Activated CD4-positive, alpha-beta T cell treated with anti-CD3 and anti-CD28 coated beads for 36 hours (primary cell): ENCODE measurements at regions of chr2 and their contacts with region 1.

Region 1: DNA sequence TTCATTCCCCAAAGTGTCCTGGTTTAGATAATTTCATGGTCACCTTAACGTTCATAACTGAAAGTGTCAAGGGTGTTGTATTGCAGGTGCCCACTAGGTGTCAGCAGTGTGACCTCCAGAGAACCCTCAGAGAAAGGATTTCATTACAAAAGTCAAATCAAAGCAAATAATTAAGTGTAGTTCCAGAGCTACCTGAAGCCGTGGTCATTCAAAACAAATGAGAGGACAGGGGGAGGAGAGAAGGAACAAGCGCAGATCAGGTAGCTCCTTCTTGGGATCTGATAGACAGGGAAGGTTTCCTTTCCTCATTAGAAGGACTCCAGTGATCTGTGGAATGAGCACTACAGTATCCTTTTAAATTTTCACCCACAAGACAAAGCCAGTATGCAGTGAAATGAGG is at the start of gene SLC9A4:
- DNase-seq: peak; percentile 77
- ATAC-seq: no peak
- H3K4me3 Mint-ChIP-seq: no peak within 1 kb of the TSS
- H3K27ac Mint-ChIP-seq: no peak within 1 kb of the TSS
- H3K4me1 Mint-ChIP-seq: no peaks in the 10 kb centered on the region
- H3K27me3 Mint-ChIP-seq: peaks cover 13% of the 10 kb centered on the region
- total RNA-seq, gene SLC9A4: 0.11 TPM in 1 of 2 experiments, not detected in the other

Region 2: GRCh38 chr2:102436323-102436722 is 36.7 kb before region 1 on chr2:
- CTCF ChIA-PET with region 1: no interaction called
- POLR2A ChIA-PET with region 1: no interaction called
- intact Hi-C with region 1: no loop called
- DNase-seq: peak; percentile 38
- ATAC-seq: no peak
- H3K4me3 Mint-ChIP-seq: no peak overlapping the region
- H3K27ac Mint-ChIP-seq: peak overlapping the region; percentile 71
- H3K4me1 Mint-ChIP-seq: peaks cover 30% of the 10 kb centered on the region
- H3K27me3 Mint-ChIP-seq: no peaks in the 10 kb centered on the region

Region 3: GRCh38 chr2:102460467-102460866 is 12.6 kb before region 1 on chr2:
- CTCF ChIA-PET with region 1: interaction called, 33 read pairs
- POLR2A ChIA-PET with region 1: no interaction called
- intact Hi-C with region 1: no loop called
- DNase-seq: no peak
- ATAC-seq: no peak
- H3K4me3 Mint-ChIP-seq: no peak overlapping the region
- H3K27ac Mint-ChIP-seq: no peak overlapping the region
- H3K4me1 Mint-ChIP-seq: no peaks in the 10 kb centered on the region
- H3K27me3 Mint-ChIP-seq: peaks cover 15% of the 10 kb centered on the region

Region 4: DNA sequence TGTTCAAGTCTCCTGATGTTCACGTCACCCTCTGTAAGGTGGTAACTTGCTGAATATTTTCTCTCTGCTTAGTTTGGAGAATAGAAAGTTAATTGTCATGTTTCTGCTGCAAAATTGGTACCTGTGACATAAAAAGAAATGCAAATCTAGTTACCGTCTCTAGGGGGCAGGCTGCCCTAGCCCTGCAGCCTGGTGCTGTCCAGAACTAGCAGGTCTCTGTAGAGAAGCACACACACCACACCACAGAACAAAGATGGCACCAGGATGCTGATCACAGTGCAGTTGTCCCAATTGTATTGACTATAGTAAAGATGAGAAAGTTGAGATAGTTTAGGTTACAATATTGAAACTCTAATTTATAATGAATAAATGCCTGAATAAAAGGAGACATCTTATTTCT is 47.0 kb after region 1 on chr2:
- CTCF ChIA-PET with region 1: interaction called, 6 read pairs
- POLR2A ChIA-PET with region 1: no interaction called
- intact Hi-C with region 1: loop called in 1 of 2 experiments (anchors 2 kb)
- DNase-seq: peak; percentile 52
- ATAC-seq: peak; percentile 80
- H3K4me3 Mint-ChIP-seq: no peak overlapping the region
- H3K27ac Mint-ChIP-seq: no peak overlapping the region
- H3K4me1 Mint-ChIP-seq: no peaks in the 10 kb centered on the region
- H3K27me3 Mint-ChIP-seq: peaks cover 2% of the 10 kb centered on the region

Region 5: DNA sequence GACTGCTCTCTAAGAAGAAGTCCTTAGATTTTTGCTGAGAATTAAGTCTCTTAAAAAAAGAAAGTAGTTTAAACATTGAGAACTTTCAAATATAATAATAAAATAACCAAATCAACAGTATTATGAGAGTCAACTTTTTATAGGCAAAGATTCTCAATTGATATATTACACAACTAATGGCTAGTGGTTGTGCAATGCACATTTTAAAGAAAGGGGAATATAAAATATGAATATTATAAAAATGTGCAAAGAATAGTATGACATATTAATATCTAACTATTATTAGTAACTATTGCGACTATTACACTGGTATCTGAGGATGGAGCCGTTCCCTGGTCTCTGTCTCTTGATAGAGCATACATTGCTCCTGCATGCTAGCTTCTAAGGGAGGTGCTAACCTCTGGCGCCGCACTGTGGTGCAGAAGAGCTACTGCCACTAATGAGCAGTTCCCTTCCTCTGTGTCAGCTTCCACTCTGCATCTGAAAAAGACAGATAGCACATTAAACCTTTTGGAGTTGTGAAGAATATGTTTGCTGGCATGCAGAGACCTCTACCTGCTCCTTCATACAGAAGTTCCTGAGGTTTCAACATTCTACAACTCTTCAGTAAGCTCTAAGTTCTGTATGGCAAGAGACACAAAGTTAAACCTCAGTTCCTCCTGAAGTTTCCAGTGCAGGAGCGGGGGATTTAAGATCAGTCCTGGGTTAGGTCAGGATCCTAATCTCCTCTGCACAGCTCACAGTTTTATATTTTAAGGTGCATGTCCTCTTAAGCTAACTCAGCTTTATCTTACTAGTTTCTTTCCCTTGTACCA is 142.8 kb after region 1 on chr2:
- CTCF ChIA-PET with region 1: interaction called, 80 read pairs
- POLR2A ChIA-PET with region 1: no interaction called
- intact Hi-C with region 1: loop called (anchors 1 kb)
- DNase-seq: peak; percentile 80
- ATAC-seq: peak; percentile 86
- H3K4me3 Mint-ChIP-seq: no peak overlapping the region
- H3K27ac Mint-ChIP-seq: no peak overlapping the region
- H3K4me1 Mint-ChIP-seq: peaks cover 15% of the 10 kb centered on the region
- H3K27me3 Mint-ChIP-seq: peaks cover 35% of the 10 kb centered on the region

Region 6: DNA sequence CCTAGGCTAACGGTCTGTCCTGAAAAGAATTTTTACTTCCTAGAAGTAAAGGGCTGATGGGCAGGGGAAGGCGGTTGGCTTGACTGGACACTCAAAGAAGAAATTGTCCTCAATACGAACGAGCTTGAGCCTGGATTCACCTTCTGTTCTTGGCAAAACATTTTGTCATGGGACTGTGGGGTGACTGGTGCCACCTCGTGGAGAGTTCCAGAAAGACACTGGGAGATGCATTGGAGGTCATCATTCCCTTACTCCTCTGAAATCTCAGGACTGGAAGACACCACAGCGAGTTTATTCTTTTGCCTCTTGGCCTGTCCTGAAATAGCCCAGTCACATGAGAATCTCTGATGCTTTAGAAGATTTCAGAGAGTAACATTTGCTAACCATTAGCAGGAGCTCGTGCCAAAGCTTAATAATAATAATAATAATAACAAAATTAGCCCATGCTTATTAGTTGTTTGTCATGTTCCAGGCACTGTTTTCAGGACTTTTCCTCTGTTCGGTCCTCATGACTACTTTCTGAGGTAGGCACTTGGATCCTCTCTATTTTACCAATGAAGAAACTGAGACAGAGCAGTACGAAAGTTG is 333.3 kb after region 1 on chr2:
- CTCF ChIA-PET with region 1: no interaction called
- POLR2A ChIA-PET with region 1: no interaction called
- intact Hi-C with region 1: loop called in 1 of 2 experiments (anchors 5 kb)
- DNase-seq: peak; percentile 64
- ATAC-seq: no peak
- H3K4me3 Mint-ChIP-seq: no peak overlapping the region
- H3K27ac Mint-ChIP-seq: no peak overlapping the region
- H3K4me1 Mint-ChIP-seq: peaks cover 22% of the 10 kb centered on the region
- H3K27me3 Mint-ChIP-seq: no peaks in the 10 kb centered on the region